Right ventricle myocardium inferior (tissue), 1 donor: ENCODE measurements at regions of chr6 and their contacts with region 1.

Region 1: DNA sequence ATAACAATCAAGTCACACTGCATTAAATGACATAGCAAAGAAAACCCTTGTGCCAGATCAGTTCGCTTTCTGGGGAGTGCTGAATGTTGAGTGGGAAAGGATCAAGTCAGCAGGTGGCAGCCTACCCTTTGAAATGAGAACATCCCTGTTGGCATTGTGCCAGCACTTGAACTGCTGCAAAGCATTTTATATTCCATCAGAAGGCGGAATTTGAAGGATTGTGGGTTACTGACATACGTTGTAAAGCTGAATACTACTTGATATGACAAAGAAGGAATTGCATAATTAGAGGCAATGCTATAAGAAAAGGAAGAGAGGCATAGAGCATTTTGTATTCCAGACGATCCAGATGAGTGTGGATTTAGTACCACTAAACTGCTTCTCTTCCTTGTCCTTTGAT is 26.5 kb downstream of the BCKDHB start:
- DNase-seq: no peak
- ATAC-seq: peak; percentile 52

Region 2: DNA sequence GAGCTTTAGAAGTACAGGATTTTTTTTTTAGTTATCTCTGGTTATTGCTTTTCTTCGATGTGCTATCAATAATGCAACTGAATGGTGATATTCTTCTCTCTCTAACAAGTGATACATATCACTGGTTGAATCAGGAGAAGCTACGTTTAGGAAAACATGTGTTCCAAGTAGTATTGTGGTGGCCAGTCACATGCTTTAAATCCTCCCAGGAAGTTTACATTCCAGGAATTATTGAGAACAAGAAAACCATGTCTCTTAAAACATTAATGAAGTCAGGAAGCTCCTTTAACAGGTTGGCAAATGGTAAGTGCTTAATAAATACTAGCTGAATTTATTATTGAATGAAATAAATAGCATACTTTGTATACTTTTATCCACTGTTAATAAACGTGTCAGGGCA is 344.6 kb after region 1 on chr6:
- intact Hi-C with region 1: loop called (anchors 10 kb)
- DNase-seq: no peak
- ATAC-seq: no peak